Natural killer cell (primary cell): ENCODE measurements at regions of chr15 and their contacts with region 1.

Region 1: DNA sequence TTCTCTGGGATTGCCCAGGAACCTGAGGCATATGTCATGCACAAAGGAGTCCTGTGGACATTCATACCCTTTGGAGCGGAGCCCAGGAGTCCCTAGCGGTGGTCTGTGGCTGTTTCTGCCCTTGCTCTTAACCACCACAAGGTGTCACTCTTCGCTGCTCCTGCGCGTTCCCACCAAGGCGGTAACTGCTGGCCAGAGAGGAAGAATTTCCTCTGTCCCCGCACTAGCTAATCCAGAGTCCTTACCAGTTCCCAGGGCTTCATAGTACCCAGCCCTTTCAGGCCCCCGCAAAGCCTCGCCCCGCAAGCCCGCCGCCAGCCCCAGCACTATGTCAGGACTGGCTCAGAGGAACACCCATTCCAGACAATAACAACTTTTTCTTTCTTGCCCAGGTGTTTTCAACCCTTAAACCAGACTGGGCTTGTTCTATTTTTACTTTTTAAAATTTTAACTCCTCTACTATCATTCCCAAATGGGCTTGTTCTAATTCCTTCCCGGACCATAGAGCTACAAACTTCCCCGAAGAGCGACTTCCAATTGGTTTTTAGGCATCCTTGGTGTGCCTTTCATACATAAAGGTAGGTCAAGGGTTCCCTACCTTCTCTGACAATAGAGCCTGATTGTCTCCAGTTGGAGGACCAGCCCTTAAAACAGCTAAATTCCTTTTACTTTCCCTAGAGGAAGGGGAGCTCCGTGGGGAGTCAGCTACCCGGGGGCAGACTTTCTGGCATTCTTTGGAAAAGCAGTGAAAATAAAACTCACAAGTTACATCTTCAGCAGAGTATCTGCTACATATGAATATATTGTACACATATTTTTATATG is 31.8 kb upstream of the ZNF774 start:
- DNase-seq: peak; percentile 55 to 88
- ATAC-seq: peak; percentile 96 to 100 (median 99)
- H3K4me3 ChIP-seq: no peak overlapping the region
- H3K4me3 Mint-ChIP-seq: peak overlapping the region; percentile 3
- H3K27ac ChIP-seq: no peak overlapping the region
- H3K27ac Mint-ChIP-seq: peak overlapping the region in 1 of 2 donors; percentile 23
- H3K4me1 ChIP-seq: peaks cover 4% of the 10 kb centered on the region
- H3K4me1 Mint-ChIP-seq: peaks cover 8 to 9% of the 10 kb centered on the region in 2 donors
- H3K27me3 ChIP-seq: no peaks in the 10 kb centered on the region
- H3K27me3 Mint-ChIP-seq: peaks cover 0 to 3% of the 10 kb centered on the region in 2 donors
- CTCF ChIP-seq: peak; percentile 91

Region 2: GRCh38 chr15:90352109-90352893 is 32.0 kb after region 1 on chr15 and contains the start of gene ZNF774:
- intact Hi-C with region 1: no loop called
- DNase-seq: peak; percentile 85 to 97
- ATAC-seq: peak; percentile 95 to 99 (median 98)
- H3K4me3 ChIP-seq: peak within 1 kb of the TSS; percentile 71
- H3K4me3 Mint-ChIP-seq: peak within 1 kb of the TSS; percentile 88
- H3K27ac ChIP-seq: no peak within 1 kb of the TSS
- H3K27ac Mint-ChIP-seq: peak within 1 kb of the TSS; percentile 62 to 92
- H3K4me1 ChIP-seq: peaks cover 12% of the 10 kb centered on the region
- H3K4me1 Mint-ChIP-seq: peaks cover 7 to 18% of the 10 kb centered on the region in 2 donors
- H3K27me3 ChIP-seq: no peaks in the 10 kb centered on the region
- H3K27me3 Mint-ChIP-seq: peaks cover 0 to 2% of the 10 kb centered on the region in 2 donors
- CTCF ChIP-seq: no peak
- total RNA-seq, gene ZNF774: 0.34 to 0.70 (median 0.47) TPM

Region 3: DNA sequence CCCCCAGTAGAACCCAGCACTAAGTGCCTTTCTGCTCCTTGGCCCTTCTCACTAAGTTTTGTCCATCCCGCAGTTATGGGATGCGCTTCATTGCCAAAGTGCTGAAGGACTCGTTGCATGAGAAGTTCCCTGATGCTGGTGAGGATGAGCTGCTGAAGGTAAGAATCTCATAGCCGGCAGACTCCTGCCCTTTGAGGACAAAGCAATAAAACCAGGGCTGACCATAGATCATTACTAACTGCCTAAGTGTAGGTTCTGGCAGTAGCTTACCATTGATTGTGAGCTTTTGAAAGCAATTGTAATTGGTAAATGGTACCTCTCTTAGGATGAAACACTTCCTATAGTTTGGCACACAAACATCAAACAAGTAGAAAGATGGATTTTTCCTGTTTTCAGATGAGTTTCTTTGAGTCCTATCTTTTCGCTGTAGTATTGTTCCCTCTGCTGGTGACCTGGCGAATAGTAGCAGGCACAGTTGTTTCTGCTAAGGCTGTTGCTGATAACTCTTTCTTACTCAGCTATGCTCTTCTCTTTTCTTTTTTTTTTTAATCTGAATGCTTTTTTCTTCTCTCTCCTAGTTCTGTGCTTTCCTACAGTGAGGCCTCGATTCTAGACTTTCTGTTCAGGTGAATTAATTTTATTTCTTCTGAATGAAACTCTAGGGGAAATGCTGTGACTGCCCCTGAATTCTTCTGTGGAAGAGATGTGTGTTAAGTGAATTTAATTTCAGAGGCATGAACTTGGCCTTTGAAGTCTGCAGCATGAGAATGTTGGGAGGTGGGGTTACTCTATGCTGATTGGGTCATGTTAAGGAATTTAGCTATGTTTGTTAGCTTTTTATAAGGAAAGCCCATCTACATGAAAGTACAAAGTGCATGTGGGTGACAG is 162.1 kb after region 1 on chr15:
- intact Hi-C with region 1: loop called (anchors 1 kb)
- DNase-seq: peak; percentile 29 to 73
- ATAC-seq: peak in 2 of 3 donors; percentile 55 to 69
- H3K4me3 ChIP-seq: no peak overlapping the region
- H3K4me3 Mint-ChIP-seq: peak overlapping the region; percentile 1
- H3K27ac ChIP-seq: no peak overlapping the region
- H3K27ac Mint-ChIP-seq: peak overlapping the region; percentile 62 to 76
- H3K4me1 ChIP-seq: peaks cover 21% of the 10 kb centered on the region
- H3K4me1 Mint-ChIP-seq: peaks cover 37 to 45% of the 10 kb centered on the region in 2 donors
- H3K27me3 ChIP-seq: no peaks in the 10 kb centered on the region
- H3K27me3 Mint-ChIP-seq: no peaks in the 10 kb centered on the region
- CTCF ChIP-seq: peak; percentile 73

Region 4: GRCh38 chr15:90603893-90604292 is 283.6 kb after region 1 on chr15:
- intact Hi-C with region 1: loop called (anchors 10 kb)
- DNase-seq: peak; percentile 26 to 66
- ATAC-seq: peak; percentile 44 to 69 (median 57)
- H3K4me3 ChIP-seq: no peak overlapping the region
- H3K4me3 Mint-ChIP-seq: no peak overlapping the region
- H3K27ac ChIP-seq: no peak overlapping the region
- H3K27ac Mint-ChIP-seq: peak overlapping the region; percentile 23 to 54
- H3K4me1 ChIP-seq: peaks cover under 1% of the 10 kb centered on the region
- H3K4me1 Mint-ChIP-seq: peaks cover 9 to 11% of the 10 kb centered on the region in 2 donors
- H3K27me3 ChIP-seq: no peaks in the 10 kb centered on the region
- H3K27me3 Mint-ChIP-seq: no peaks in the 10 kb centered on the region
- CTCF ChIP-seq: peak; percentile 70